Activated CD4-positive, alpha-beta T cell treated with anti-CD3 and anti-CD28 coated beads, Interleukin-2, amount 10 ng/mL, durations not matched to agents 24 days and 14 days (primary cell): ENCODE measurements at regions of chr3 and their contacts with region 1.

Region 1: GRCh38 chr3:182967218-182968204 is 12.8 kb downstream of the DCUN1D1 start:
- DNase-seq: peak; percentile 74
- H3K4me3 Mint-ChIP-seq: peak overlapping the region; percentile 34
- H3K27ac Mint-ChIP-seq: peak overlapping the region; percentile 84
- H3K4me1 Mint-ChIP-seq: peaks cover 42% of the 10 kb centered on the region
- H3K27me3 Mint-ChIP-seq: no peaks in the 10 kb centered on the region

Region 2: GRCh38 chr3:182909318-182910040 is 58.0 kb before region 1 on chr3:
- intact Hi-C with region 1: loop called (anchors 5 kb)
- DNase-seq: no peak
- H3K4me3 Mint-ChIP-seq: no peak overlapping the region
- H3K27ac Mint-ChIP-seq: no peak overlapping the region
- H3K4me1 Mint-ChIP-seq: peaks cover 35% of the 10 kb centered on the region
- H3K27me3 Mint-ChIP-seq: no peaks in the 10 kb centered on the region

Region 3: GRCh38 chr3:182979674-182980191 is 12.2 kb after region 1 on chr3:
- intact Hi-C with region 1: loop called (anchors 1 kb)
- DNase-seq: peak; percentile 77
- H3K4me3 Mint-ChIP-seq: peak overlapping the region; percentile 97
- H3K27ac Mint-ChIP-seq: peak overlapping the region; percentile 88
- H3K4me1 Mint-ChIP-seq: peaks cover 27% of the 10 kb centered on the region
- H3K27me3 Mint-ChIP-seq: no peaks in the 10 kb centered on the region

Region 4: DNA sequence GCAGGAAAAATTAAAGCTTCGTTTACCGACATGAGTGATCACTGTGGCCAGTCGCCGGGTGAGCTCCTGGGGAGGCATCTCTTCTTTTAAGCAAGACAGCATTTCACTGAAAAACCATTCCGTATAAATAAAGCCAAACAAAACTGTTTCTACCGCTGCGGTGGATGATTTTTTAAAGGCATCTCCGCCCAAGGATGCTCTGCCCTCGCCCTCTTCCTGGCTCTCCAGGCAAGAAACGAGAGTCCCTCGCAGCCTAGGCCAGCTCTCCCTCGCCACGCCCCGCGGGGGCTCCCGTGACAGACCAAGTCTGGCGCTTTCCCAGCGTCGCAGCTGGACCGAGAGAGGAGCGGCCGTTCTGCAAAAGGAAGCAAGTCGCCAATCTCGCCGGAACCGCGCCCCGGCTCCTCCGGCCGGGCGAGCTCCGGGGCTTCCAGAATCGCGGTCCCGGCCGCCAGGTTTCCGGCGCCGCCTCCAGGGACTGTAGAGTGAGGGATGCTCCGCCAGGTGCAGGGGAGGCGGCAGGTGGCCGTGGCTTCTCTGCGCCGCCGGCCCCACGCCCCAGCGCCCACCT is 460.4 kb after region 1 on chr3:
- intact Hi-C with region 1: loop called (anchors 5 kb)
- DNase-seq: peak; percentile 82
- H3K4me3 Mint-ChIP-seq: peak overlapping the region; percentile 82
- H3K27ac Mint-ChIP-seq: peak overlapping the region; percentile 57
- H3K4me1 Mint-ChIP-seq: peaks cover 35% of the 10 kb centered on the region
- H3K27me3 Mint-ChIP-seq: peaks cover 2% of the 10 kb centered on the region